ENCODE measurements at regions of chrX and their contacts with region 1.

Region 1: GRCh38 chrX:121256647-121257046 is 209.2 kb downstream of the GLUD2 start:
- DNase-seq: no peak
- H3K4me3 Mint-ChIP-seq: no peak overlapping the region
- H3K27ac Mint-ChIP-seq: peak overlapping the region; percentile 76
- H3K4me1 Mint-ChIP-seq: peaks cover 11% of the 10 kb centered on the region
- H3K27me3 Mint-ChIP-seq: no peaks in the 10 kb centered on the region

Region 2: DNA sequence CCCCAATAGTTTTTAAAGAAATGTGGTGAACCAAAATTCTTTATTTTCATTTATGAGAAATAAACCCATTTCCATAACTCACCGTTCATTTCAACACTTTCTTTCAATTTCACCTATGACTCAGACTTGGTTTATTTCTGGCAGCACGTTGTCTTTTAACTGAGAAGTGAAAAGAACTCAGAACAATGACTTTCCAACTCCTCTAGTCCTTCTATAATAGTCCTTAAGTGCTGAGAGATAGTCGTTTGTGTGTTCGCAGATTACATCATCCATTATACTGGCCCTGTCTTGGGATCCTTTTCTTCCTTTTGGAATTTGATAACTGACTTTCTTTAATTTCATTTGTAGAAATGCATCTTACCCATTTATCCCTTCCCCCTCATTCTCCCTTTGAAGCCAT is 95.7 kb before region 1 on chrX:
- intact Hi-C with region 1: loop called (anchors 5 kb)
- DNase-seq: no peak
- H3K4me3 Mint-ChIP-seq: peak overlapping the region; percentile 17
- H3K27ac Mint-ChIP-seq: peak overlapping the region; percentile 88
- H3K4me1 Mint-ChIP-seq: peaks cover 37% of the 10 kb centered on the region
- H3K27me3 Mint-ChIP-seq: no peaks in the 10 kb centered on the region

Region 3: DNA sequence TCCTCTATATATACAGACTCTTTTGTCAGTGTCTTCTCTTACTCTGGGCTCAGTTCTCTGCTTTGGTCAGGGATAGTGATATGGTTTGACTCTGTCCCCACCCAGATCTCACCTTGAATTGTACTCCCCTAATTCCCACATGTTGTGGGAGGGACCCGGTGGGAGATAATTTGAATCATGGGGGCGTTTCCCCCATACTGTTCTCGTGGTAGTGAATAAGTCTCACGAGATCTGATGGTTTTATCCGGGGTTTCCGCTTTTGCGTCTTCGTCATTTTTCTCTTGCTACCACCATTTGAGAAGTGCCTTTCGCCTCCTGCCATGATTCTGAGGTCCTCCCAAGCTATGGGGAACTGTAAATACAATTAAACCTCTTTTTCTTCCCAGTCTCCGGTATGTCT is 64.9 kb before region 1 on chrX:
- intact Hi-C with region 1: no loop called
- DNase-seq: no peak
- H3K4me3 Mint-ChIP-seq: no peak overlapping the region
- H3K27ac Mint-ChIP-seq: no peak overlapping the region
- H3K4me1 Mint-ChIP-seq: no peaks in the 10 kb centered on the region
- H3K27me3 Mint-ChIP-seq: no peaks in the 10 kb centered on the region

Region 4: DNA sequence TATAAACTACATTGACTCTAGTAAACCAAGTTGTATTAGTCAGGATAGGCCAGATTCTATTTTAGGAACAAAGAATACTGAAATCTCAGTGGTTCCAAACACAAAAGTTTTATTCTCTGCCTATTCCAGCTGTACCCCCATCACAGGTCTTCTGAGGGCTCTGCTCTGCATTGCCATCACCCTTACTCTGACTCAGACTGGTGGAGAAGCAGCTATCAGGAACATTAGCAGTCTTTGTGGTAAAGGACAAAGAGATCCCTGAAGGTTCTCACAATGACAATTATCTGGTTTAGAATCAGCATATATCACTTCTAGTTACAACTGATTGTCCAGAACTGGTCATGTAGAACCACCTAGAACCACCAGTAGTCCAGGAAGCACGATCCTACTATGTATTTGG is 41.9 kb after region 1 on chrX:
- intact Hi-C with region 1: loop called (anchors 1 kb)
- DNase-seq: no peak
- H3K4me3 Mint-ChIP-seq: no peak overlapping the region
- H3K27ac Mint-ChIP-seq: no peak overlapping the region
- H3K4me1 Mint-ChIP-seq: peaks cover 6% of the 10 kb centered on the region
- H3K27me3 Mint-ChIP-seq: no peaks in the 10 kb centered on the region

Region 5: DNA sequence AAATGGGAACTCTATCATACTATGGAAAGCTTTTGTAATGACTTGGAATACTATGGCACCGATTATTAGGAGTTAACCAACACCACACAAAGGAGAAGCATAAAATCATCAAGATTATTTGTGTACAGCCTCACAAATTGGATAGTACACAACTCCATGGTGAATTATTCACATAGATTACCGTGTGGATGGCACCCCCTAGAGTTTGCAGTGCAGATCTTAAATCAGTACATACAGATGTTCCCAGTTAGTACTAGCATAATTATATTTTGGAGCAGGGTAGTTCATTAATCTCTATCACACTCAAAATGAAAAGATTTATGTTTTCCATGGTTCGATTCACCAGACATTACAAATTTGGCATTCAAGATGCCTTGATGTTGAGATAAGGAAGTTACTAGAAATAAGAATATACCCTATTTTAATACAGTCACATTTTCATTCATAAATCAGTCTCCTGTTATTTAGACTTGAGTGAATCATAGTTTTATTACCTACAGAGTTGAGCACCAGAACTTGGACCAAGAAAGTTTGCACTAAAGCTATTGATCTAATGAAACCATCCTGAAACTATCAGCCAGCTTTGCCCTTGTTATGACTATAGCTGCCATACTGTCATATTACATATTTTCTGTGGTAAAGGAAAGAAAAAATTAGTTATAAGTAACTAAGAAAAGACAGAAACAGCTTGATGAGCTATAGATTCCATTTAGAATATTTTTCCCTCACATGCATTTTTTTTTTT is 322.5 kb after region 1 on chrX:
- intact Hi-C with region 1: loop called (anchors 5 kb)
- DNase-seq: no peak
- H3K4me3 Mint-ChIP-seq: no peak overlapping the region
- H3K27ac Mint-ChIP-seq: no peak overlapping the region
- H3K4me1 Mint-ChIP-seq: peaks cover 2% of the 10 kb centered on the region
- H3K27me3 Mint-ChIP-seq: no peaks in the 10 kb centered on the region